ENCODE measurements at regions of chr6 and their contacts with region 1.

Region 1: DNA sequence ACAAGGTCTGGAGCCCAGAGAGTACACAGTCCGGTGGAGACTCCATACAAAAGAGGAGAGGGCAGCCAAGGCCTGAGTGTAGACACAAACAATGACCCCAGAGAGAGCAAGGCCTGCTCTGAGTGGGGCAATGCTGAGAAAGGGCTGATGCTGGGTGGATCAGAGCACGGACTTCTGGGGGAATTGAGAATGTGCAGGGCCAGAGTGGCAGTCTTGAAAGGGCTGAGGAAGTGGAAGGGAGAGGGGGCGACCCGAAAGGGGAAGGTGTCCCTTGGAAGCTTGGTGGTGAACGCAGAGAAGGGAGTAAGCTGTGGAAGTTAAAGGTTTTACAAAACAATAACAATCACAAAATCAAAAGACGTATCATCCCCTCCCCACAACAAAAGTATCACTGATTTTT is 12.0 kb upstream of the GRM4 start:
- DNase-seq: no peak
- ATAC-seq: no peak
- H3K4me3 Mint-ChIP-seq: no peak overlapping the region
- H3K27ac Mint-ChIP-seq: peak overlapping the region in 4 of 10 donors; percentile 4 to 44 (median 30)
- H3K4me1 Mint-ChIP-seq: peaks cover 2 to 24% (median 9%) of the 10 kb centered on the region in 4 donors
- H3K27me3 Mint-ChIP-seq: peaks cover 2 to 15% (median 6%) of the 10 kb centered on the region in 5 donors

Region 2: DNA sequence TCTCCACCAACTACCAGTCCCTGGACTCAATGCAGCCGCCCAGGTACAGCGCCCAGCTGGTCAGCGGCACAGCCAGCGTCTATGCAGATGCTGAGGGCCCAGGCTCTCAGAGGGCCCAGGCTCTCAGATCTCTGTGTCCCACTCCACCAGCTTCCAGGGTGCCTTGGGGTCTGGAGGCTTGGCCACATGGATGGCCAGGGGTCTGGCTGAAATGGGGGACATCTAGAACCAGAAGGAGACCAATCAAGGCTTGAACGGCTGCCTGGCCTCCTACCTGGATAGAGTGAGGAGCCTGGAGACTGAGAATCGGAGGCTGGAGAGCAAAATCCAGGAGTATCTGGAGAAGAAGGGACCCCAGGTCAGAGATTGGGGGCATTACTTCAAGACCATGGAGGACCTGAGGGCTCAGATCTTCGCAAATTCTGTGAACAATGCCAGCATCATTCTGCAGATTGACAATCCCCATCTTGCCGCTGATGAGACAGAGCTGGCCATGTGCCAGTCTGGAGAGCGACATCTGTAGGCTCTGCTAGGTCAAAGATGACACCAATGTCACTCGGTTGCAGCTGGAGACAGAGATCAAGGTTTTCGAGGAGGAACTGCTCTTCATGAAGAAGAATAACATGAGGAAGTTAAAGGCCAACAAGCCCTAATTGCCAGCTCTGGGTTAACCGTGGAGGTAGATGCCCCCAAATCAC is 32.1 kb after region 1 on chr6:
- POLR2A ChIA-PET with region 1: interaction called, 11 read pairs
- DNase-seq: peak; percentile 24 to 84 (median 58)
- ATAC-seq: peak; percentile 94
- H3K4me3 Mint-ChIP-seq: no peak overlapping the region
- H3K27ac Mint-ChIP-seq: peak overlapping the region in 8 of 10 donors; percentile 13 to 84 (median 50)
- H3K4me1 Mint-ChIP-seq: peaks cover 8 to 15% (median 11%) of the 10 kb centered on the region in 4 donors
- H3K27me3 Mint-ChIP-seq: no peaks in the 10 kb centered on the region